WTC11 (cell line): ENCODE measurements at regions of chr7 and their contacts with region 1.

Region 1: DNA sequence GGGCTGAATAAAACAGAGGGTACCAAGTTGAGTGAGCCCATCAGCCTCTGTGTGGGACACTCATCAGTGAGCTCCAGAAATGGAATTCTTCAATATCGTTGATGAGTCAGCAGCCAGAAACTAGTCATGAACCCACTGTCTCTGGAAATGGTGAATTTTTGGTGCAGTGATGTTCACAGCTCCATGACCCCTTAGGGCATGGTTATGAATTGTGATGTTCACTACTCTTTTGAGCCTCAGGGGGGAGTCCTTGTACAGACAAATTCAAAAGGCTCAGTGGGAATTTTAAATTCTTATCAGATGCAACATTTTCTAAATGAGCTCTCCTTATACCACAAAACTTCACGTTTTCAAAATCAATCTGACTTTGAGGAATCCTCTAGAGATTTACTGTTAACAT is 335.7 kb downstream of the PHTF2 start:
- DNase-seq: no peak
- ATAC-seq: peak; percentile 63
- H3K4me3 Mint-ChIP-seq: no peak overlapping the region
- H3K27ac Mint-ChIP-seq: no peak overlapping the region
- H3K4me1 Mint-ChIP-seq: peaks cover 16% of the 10 kb centered on the region
- H3K27me3 Mint-ChIP-seq: no peaks in the 10 kb centered on the region
- CTCF ChIP-seq: peak; percentile 53

Region 2: GRCh38 chr7:78090616-78091015 is 43.6 kb before region 1 on chr7:
- CTCF ChIA-PET with region 1: interaction called, 16 read pairs
- POLR2A ChIA-PET with region 1: no interaction called
- DNase-seq: no peak
- ATAC-seq: peak; percentile 47; the same call in 1 of the 2 replicates
- H3K4me3 Mint-ChIP-seq: no peak overlapping the region
- H3K27ac Mint-ChIP-seq: no peak overlapping the region
- H3K4me1 Mint-ChIP-seq: no peaks in the 10 kb centered on the region
- H3K27me3 Mint-ChIP-seq: no peaks in the 10 kb centered on the region
- CTCF ChIP-seq: no peak

Region 3: GRCh38 chr7:78124216-78124615 is 10.0 kb before region 1 on chr7:
- CTCF ChIA-PET with region 1: interaction called, 13 read pairs
- POLR2A ChIA-PET with region 1: no interaction called
- DNase-seq: no peak
- ATAC-seq: no peak
- H3K4me3 Mint-ChIP-seq: no peak overlapping the region
- H3K27ac Mint-ChIP-seq: no peak overlapping the region
- H3K4me1 Mint-ChIP-seq: peaks cover 16% of the 10 kb centered on the region
- H3K27me3 Mint-ChIP-seq: no peaks in the 10 kb centered on the region
- CTCF ChIP-seq: no peak

Region 4: DNA sequence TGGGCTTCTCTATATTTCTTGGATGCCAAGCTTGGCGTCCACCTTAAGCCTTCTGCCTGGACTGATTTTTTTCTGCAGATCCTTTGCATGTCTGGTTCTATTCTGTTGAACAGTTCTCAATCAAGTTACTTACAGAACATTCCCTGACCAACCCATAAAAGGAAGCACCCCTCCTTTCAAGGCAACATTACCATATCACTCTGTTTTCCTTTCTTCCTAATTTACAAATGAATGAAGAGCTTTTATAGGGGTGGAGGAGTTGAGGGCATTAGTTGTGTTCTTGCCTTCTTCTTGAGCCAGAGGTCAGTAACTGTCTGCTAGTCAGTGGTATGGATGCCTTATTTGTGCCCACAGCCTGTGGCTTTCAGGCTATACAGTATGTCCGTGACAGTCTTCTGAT is 25.3 kb after region 1 on chr7:
- CTCF ChIA-PET with region 1: interaction called, 14 read pairs
- POLR2A ChIA-PET with region 1: no interaction called
- DNase-seq: no peak
- ATAC-seq: peak; percentile 91
- H3K4me3 Mint-ChIP-seq: peak overlapping the region; percentile 38
- H3K27ac Mint-ChIP-seq: peak overlapping the region; percentile 66; the same call in 1 of the 2 replicates
- H3K4me1 Mint-ChIP-seq: peaks cover 51% of the 10 kb centered on the region
- H3K27me3 Mint-ChIP-seq: peaks cover 7% of the 10 kb centered on the region; the same call in 1 of the 2 replicates
- CTCF ChIP-seq: no peak

Region 5: GRCh38 chr7:78207269-78207668 is 73.0 kb after region 1 on chr7:
- CTCF ChIA-PET with region 1: interaction called, 10 read pairs
- POLR2A ChIA-PET with region 1: no interaction called
- DNase-seq: no peak
- ATAC-seq: no peak
- H3K4me3 Mint-ChIP-seq: no peak overlapping the region
- H3K27ac Mint-ChIP-seq: no peak overlapping the region
- H3K4me1 Mint-ChIP-seq: peaks cover 15% of the 10 kb centered on the region
- H3K27me3 Mint-ChIP-seq: no peaks in the 10 kb centered on the region
- CTCF ChIP-seq: no peak

Region 6: DNA sequence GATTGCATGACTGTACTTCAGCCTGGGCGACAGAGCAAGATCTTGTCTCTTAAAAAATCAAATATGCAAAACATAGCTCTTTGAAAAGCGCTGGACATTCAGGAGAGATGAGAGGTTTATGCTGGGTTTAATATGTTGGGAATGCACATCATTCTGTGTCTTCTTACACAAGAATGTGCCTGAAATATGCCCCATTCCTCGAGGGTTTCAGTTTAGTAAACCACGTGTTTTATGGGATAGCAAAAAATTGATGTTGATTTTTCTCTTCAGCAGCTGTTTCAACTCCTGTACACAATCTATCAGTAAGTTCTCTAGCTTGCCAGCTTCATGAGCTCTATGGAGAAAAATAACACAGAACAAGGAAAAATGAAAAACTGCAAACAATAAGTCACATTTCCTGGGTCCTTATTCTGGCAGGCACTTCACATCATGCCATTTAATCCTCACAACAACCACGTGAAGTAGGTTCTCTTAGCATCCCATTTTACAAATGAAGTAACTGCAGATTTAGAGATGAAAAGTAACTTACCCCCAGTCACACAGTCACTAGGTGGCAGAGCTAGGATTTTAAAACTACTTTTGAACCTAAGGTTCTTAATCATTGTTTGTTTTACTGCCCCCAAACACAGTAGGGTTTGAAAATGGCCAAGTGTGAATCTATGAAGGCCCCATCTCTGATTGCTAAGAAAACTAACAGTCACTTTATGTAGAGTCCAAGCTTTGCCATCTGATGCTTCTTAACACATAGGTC is 87.9 kb after region 1 on chr7:
- CTCF ChIA-PET with region 1: interaction called, 21 read pairs
- POLR2A ChIA-PET with region 1: no interaction called
- DNase-seq: no peak
- ATAC-seq: no peak
- H3K4me3 Mint-ChIP-seq: no peak overlapping the region
- H3K27ac Mint-ChIP-seq: no peak overlapping the region
- H3K4me1 Mint-ChIP-seq: peaks cover 3% of the 10 kb centered on the region
- H3K27me3 Mint-ChIP-seq: no peaks in the 10 kb centered on the region
- CTCF ChIP-seq: no peak